ENCODE measurements at regions of chr20 and their contacts with region 1.

Region 1: GRCh38 chr20:44080646-44081267 is 106.2 kb downstream of the JPH2 start:
- DNase-seq: peak; percentile 84
- H3K4me3 ChIP-seq: no peak overlapping the region
- H3K27ac ChIP-seq: no peak overlapping the region
- H3K4me1 ChIP-seq: peaks cover 0 to 25% (median 7%) of the 10 kb centered on the region in 4 donors
- H3K27me3 ChIP-seq: no peaks in the 10 kb centered on the region
- CTCF ChIP-seq: peak; percentile 95 to 99 (median 98)
- EP300 ChIP-seq: no peak
- POLR2A ChIP-seq: no peak

Region 2: DNA sequence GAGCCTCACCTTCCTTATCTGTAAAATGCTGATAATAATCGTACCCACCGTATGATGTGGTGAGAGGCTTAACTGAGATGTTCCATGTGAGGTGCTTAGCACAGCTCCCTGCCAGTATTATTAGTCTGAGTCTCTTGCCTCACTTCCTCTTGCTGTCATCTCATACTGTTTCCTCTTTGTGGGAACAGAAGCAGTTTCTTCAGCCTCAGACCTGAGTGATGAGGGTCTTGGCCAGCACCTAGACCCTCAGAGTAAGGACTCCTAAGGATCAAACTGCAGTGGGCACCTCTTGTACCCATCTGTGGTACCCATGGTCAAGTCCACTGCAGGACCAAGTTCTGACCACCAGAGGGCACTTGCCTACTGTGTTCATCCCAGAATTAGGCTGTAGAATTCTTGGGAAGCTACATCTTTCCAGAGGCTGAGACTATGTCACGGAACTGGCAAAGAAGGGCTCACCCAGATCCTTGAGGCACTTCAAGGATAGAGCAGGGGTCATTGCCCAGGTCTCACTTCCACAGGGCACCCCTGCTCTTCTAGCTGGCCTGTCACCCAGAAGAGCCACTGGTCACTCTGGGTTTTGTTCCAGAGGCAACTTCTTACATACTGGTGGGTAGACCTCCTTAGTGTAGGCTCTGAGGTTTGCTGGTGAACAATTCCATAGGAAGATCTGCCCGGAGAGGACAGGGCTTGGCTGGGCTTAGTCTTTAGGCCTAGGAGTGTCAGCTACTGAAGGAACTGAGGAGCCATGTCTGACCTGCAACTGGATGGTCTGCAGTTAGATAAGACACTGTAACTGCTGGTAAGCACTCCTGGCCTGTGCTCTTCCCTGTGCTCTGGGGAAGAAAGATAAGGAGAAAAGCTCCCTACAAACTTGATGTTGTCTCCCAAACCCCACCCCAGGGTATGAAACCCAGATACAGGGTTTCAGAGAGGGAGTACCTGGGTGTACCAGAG is 542.6 kb before region 1 on chr20:
- intact Hi-C with region 1: loop called (anchors 5 kb)
- DNase-seq: no peak
- H3K4me3 ChIP-seq: no peak overlapping the region
- H3K27ac ChIP-seq: no peak overlapping the region
- H3K4me1 ChIP-seq: no peaks in the 10 kb centered on the region
- H3K27me3 ChIP-seq: no peaks in the 10 kb centered on the region
- CTCF ChIP-seq: peak; percentile 45 to 89 (median 77)
- EP300 ChIP-seq: no peak
- POLR2A ChIP-seq: no peak

Region 3: DNA sequence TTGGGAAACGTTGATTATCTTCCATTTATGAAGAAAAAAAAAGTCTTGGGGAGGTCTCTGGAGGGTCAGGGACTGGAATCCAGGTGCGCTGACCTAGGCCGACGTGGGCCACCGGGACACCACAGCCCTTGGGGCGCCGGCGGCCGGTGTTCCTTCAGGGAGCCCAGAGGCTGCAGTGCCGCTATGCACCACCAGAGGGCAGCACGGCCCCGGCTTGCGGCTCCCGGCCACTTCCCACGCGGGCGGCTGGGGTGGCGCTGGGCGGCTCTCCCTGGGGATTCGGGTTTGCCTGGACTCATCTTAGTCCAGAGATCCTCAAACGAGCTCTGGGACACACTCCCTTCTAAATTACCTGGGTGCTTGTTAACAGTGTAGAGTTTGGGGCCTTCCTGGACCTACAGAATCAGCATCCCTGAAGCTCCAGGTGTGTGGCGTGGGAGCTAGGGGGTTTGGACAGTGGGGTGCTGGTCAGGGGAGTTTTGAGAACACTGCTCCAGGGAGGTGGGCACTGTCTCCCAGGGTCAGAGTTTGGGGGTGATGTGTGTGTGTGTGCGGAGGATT is 330.9 kb before region 1 on chr20:
- intact Hi-C with region 1: loop called (anchors 1 kb)
- DNase-seq: peak; percentile 83
- H3K4me3 ChIP-seq: no peak overlapping the region
- H3K27ac ChIP-seq: peak overlapping the region in 1 of 4 donors; percentile 81
- H3K4me1 ChIP-seq: peaks cover 0 to 8% (median 0%) of the 10 kb centered on the region in 4 donors
- H3K27me3 ChIP-seq: peaks cover 0 to 21% (median 0%) of the 10 kb centered on the region in 3 donors
- CTCF ChIP-seq: peak; percentile 80 to 100 (median 96)
- EP300 ChIP-seq: no peak
- POLR2A ChIP-seq: no peak

Region 4: DNA sequence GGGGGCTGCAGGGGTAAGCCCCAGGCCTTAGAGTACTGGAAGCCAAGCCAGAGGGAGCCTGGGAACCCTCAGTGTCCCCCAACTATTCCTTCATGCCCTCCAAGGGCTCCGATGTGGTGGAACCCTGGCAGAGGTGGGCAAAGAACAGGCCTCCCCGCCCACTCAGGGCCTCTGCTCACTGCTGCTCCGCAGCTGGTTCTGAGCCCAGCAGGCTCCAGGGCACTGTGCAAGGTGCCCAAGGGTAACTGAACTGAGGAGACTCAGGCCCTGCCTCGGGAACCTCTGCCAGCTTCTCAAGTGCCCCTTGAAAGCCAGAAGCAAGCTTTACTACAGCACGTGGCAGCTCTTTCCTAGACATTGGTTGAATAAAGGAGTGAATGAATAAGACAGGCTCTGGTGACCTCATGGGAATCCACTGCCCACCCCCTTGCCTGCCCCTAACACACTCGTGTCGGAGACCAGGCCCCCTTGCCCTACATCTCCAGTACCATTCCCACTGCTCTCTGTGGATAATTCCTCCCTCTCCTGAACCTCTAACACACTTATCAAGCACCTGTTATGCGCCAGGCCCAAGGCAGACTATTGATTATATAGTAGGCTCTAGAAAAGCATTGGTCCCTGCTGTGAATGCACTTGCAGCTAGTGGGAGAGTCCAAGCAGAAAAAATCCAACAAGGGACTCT is 111.1 kb before region 1 on chr20:
- intact Hi-C with region 1: no loop called
- DNase-seq: no peak
- H3K4me3 ChIP-seq: no peak overlapping the region
- H3K27ac ChIP-seq: no peak overlapping the region
- H3K4me1 ChIP-seq: no peaks in the 10 kb centered on the region
- H3K27me3 ChIP-seq: peaks cover 0 to 6% (median 0%) of the 10 kb centered on the region in 3 donors
- CTCF ChIP-seq: no peak
- EP300 ChIP-seq: no peak
- POLR2A ChIP-seq: no peak

Region 5: DNA sequence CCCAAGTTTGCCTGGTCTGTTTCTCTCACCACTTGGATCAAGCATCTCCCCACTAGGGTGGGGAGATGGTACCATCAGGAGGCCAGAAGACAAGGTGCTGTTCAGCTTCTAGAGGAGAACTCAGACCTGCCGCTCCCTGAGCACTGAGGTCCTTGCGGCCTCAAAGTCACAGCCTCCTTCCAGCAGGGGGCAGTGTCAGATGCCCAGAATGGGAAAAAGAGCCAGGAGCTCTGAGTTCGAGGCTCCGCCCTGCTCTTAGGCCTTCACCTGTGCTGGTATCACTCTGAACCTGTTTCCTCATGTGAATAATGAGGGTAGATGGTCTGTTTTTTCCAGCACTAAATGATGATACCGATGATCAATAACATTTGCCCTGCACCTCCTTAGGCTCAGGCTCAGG is 97.4 kb before region 1 on chr20:
- intact Hi-C with region 1: loop called (anchors 5 kb)
- DNase-seq: no peak
- H3K4me3 ChIP-seq: no peak overlapping the region
- H3K27ac ChIP-seq: no peak overlapping the region
- H3K4me1 ChIP-seq: no peaks in the 10 kb centered on the region
- H3K27me3 ChIP-seq: no peaks in the 10 kb centered on the region
- CTCF ChIP-seq: peak in 1 of 4 experiments; percentile 10
- EP300 ChIP-seq: no peak
- POLR2A ChIP-seq: no peak

Region 6: DNA sequence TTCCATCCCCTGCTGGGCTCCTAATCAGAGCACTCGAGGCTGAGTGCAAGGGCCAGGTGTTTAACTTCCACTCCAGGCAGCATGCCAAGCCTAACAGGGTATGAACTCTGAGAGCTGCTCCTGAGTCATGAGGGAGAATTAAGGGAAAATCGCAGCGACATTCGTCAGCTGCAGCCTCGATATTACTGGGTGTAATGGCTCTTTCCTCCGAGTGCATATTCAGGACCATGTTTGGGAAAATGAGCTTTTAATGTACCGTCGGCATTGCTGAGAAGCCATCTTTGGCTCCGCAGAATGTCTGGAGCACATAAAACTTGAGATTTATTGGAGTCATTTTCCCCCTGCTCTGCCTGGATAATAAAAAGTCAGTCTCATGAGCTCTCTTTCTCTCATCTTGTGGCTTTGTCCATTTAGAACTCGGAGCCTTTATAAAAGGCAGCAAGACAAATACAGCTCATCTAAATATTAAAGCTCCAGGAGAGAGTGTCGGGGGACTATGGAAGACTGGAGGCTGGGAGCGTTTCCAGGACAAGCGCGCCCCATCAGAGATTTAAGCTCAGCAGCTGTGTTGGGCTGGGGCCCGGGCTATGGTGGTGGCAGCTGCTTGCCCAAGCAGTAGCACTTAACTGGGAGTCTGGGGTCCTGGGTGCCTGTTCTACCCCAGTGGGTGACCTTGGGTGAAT is 62.4 kb before region 1 on chr20:
- intact Hi-C with region 1: loop called (anchors 5 kb)
- DNase-seq: peak; percentile 91
- H3K4me3 ChIP-seq: peak overlapping the region in 2 of 4 donors; percentile 6 to 13
- H3K27ac ChIP-seq: peak overlapping the region; percentile 76 to 87 (median 81)
- H3K4me1 ChIP-seq: peaks cover 0 to 60% (median 42%) of the 10 kb centered on the region in 4 donors
- H3K27me3 ChIP-seq: peaks cover 0 to 3% (median 0%) of the 10 kb centered on the region in 3 donors
- CTCF ChIP-seq: no peak
- EP300 ChIP-seq: peak; percentile 28 to 87 (median 50)
- POLR2A ChIP-seq: no peak

Region 7: DNA sequence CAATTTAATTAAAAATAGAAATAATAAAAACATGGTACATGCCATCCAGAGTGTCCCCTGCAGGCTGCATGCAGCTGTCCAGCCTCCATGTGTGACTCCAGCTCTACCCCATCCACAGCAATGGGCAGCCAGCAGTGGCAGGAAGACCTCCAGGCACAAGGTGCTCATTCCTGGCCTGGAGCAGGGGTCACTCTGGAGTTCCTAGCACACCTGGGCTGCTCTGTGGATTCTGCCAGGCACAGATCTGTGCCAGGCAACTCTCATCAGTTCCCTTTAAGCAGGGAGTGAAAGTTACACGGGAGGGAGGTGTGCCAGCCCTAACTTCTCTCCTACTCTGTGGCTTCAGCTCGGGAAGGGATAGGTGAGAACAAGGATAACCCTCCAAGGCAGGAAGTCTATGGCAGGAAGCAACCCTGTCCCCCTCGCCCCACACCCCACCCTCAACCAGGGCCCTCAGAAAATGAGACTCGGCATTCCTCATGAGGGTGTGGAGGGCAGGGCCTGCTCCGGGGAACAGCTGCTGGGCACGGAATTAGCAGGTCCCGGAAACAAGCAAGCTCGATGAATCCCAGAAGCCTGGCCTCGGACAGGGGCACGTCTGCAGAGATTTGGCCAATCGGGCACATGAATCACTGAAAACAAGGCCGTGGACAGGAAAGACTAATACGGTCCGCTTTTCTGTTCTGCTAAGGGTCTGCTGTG is 96.2 kb after region 1 on chr20:
- intact Hi-C with region 1: no loop called
- DNase-seq: peak; percentile 75
- H3K4me3 ChIP-seq: peak overlapping the region in 2 of 4 donors; percentile 7 to 21
- H3K27ac ChIP-seq: peak overlapping the region; percentile 91 to 99 (median 95)
- H3K4me1 ChIP-seq: peaks cover 0 to 98% (median 82%) of the 10 kb centered on the region in 4 donors
- H3K27me3 ChIP-seq: no peaks in the 10 kb centered on the region
- CTCF ChIP-seq: no peak
- EP300 ChIP-seq: no peak
- POLR2A ChIP-seq: no peak

Region 8: GRCh38 chr20:44231713-44232468 is 151.1 kb after region 1 on chr20:
- intact Hi-C with region 1: no loop called
- DNase-seq: no peak
- H3K4me3 ChIP-seq: no peak overlapping the region
- H3K27ac ChIP-seq: no peak overlapping the region
- H3K4me1 ChIP-seq: no peaks in the 10 kb centered on the region
- H3K27me3 ChIP-seq: no peaks in the 10 kb centered on the region
- CTCF ChIP-seq: no peak
- EP300 ChIP-seq: no peak
- POLR2A ChIP-seq: no peak

Measured in sigmoid colon (tissue), 7 donors.